Natural killer cell (primary cell): ENCODE measurements at regions of chr4 and their contacts with region 1.

Region 1: GRCh38 chr4:13654158-13654797 is 26.8 kb upstream of the BOD1L1 start:
- DNase-seq: peak; percentile 76 to 85
- ATAC-seq: peak; percentile 95 to 98 (median 95)
- H3K4me3 ChIP-seq: peak overlapping the region; percentile 49
- H3K4me3 Mint-ChIP-seq: peak overlapping the region; percentile 88
- H3K27ac ChIP-seq: no peak overlapping the region
- H3K27ac Mint-ChIP-seq: peak overlapping the region in 1 of 2 donors; percentile 53
- H3K4me1 ChIP-seq: peaks cover 9% of the 10 kb centered on the region
- H3K4me1 Mint-ChIP-seq: peaks cover 13 to 20% of the 10 kb centered on the region in 2 donors
- H3K27me3 ChIP-seq: no peaks in the 10 kb centered on the region
- H3K27me3 Mint-ChIP-seq: peaks cover 4% of the 10 kb centered on the region in 2 donors
- CTCF ChIP-seq: peak; percentile 90

Region 2: GRCh38 chr4:13313856-13314255 is 340.4 kb before region 1 on chr4:
- intact Hi-C with region 1: no loop called
- DNase-seq: no peak
- ATAC-seq: no peak
- H3K4me3 ChIP-seq: no peak overlapping the region
- H3K4me3 Mint-ChIP-seq: no peak overlapping the region
- H3K27ac ChIP-seq: no peak overlapping the region
- H3K27ac Mint-ChIP-seq: no peak overlapping the region
- H3K4me1 ChIP-seq: no peaks in the 10 kb centered on the region
- H3K4me1 Mint-ChIP-seq: no peaks in the 10 kb centered on the region
- H3K27me3 ChIP-seq: no peaks in the 10 kb centered on the region
- H3K27me3 Mint-ChIP-seq: no peaks in the 10 kb centered on the region
- CTCF ChIP-seq: no peak

Region 3: DNA sequence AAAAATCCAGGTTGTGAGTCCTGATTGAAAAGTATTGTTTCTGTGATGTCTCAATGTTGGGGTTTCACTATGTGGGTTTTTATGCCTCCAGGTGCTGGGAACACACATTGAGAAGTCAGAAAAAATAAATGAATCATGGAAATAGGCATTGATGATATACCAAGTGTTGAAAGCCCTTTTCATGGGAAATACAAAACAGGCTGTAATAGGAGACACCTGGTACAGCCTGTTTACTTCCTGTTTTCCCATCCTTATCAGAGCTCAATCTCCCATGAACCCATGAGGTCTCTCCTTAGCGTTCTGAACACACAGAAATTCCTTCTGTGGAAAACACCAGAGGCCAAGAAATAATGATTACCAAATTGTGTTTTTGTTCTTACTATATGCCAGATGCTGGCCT is 79.5 kb after region 1 on chr4:
- intact Hi-C with region 1: no loop called
- DNase-seq: no peak
- ATAC-seq: no peak
- H3K4me3 ChIP-seq: no peak overlapping the region
- H3K4me3 Mint-ChIP-seq: no peak overlapping the region
- H3K27ac ChIP-seq: no peak overlapping the region
- H3K27ac Mint-ChIP-seq: no peak overlapping the region
- H3K4me1 ChIP-seq: no peaks in the 10 kb centered on the region
- H3K4me1 Mint-ChIP-seq: no peaks in the 10 kb centered on the region
- H3K27me3 ChIP-seq: no peaks in the 10 kb centered on the region
- H3K27me3 Mint-ChIP-seq: peaks cover 0 to 3% of the 10 kb centered on the region in 2 donors
- CTCF ChIP-seq: no peak

Region 4: GRCh38 chr4:15162465-15163283 is 1508.4 kb after region 1 on chr4:
- intact Hi-C with region 1: loop called (anchors 10 kb)
- DNase-seq: peak in 1 of 2 donors; percentile 4
- ATAC-seq: no peak
- H3K4me3 ChIP-seq: no peak overlapping the region
- H3K4me3 Mint-ChIP-seq: no peak overlapping the region
- H3K27ac ChIP-seq: no peak overlapping the region
- H3K27ac Mint-ChIP-seq: no peak overlapping the region
- H3K4me1 ChIP-seq: no peaks in the 10 kb centered on the region
- H3K4me1 Mint-ChIP-seq: no peaks in the 10 kb centered on the region
- H3K27me3 ChIP-seq: no peaks in the 10 kb centered on the region
- H3K27me3 Mint-ChIP-seq: peaks cover 11 to 14% of the 10 kb centered on the region in 2 donors
- CTCF ChIP-seq: no peak

Region 5: DNA sequence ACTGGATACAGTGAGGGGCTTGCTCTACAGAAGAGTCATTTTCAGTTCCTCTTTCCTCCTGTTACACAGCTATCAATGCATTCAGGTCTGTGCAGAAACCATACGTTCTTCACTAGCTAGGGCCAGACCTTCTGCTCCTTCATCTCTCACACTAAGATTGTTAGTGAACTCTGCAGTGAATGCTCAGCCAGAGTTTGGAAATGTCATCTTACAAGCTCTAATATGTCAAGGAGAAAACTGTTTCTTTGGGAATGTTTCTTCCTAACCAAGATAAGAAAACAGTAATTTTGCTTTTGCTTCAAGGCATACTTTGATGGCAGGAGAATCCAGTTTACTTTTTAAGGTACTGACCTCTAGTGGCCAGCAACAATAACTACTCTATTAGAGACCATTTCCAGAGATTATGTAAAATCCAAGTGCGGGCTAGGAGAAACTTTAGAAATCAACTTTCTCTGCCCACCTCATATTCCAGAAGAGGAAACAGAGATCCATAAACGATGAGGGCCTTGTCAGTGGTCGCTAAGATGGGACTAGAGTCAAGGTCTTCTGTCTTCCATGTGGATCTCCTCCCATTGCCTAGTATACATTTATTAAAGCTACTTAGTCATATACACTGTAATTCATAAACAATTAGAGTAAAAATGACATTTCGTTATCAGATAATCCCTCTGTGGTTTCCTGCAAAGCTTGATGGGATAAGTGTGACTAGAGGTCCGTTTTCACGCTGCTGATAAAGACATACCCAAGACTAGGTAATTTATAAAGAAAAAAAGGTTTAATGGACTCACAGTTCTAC is 1803.3 kb after region 1 on chr4:
- intact Hi-C with region 1: loop called (anchors 5 kb)
- DNase-seq: peak in 1 of 2 donors; percentile 66
- ATAC-seq: peak; percentile 64 to 81 (median 69)
- H3K4me3 ChIP-seq: no peak overlapping the region
- H3K4me3 Mint-ChIP-seq: no peak overlapping the region
- H3K27ac ChIP-seq: no peak overlapping the region
- H3K27ac Mint-ChIP-seq: no peak overlapping the region
- H3K4me1 ChIP-seq: no peaks in the 10 kb centered on the region
- H3K4me1 Mint-ChIP-seq: peaks cover 0 to 4% of the 10 kb centered on the region in 2 donors
- H3K27me3 ChIP-seq: no peaks in the 10 kb centered on the region
- H3K27me3 Mint-ChIP-seq: peaks cover 5 to 12% of the 10 kb centered on the region in 2 donors
- CTCF ChIP-seq: peak; percentile 79